Endothelial cell of umbilical vein (primary cell): ENCODE measurements at regions of chrX and their contacts with region 1.

Region 1: DNA sequence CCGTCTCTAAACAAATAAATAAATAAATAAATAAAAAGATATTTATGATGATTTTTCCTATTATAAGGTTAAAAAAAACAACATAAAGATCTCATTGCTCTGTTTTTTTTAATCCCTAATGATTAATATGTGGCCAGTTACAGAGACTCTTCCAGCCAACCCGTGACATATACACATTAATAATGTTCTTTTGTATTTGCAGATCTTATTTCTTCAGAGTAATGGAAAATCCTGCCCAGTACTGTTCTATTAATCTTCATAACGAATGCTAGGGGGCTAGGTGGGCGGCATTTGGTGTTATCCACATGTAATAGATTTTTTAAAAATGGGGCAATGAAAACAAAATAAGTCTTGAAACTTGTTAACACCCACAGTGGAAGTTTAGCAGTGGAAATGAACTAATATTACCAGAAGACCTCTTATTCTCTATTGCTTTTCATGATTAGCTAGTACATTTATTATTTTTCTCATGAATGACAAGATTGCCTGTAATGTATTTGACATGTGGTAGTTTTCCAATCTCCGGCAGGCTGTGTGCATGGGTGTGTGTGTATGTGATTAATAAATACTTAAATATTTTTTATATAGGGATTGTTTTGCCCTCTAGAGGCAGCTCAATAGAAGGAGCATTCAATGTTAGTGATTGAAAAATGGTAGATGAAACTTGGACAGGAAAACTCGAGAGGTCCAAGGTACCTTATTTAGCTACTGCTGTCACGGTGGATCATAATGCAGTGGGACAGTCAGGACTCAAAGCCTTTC is 457.4 kb downstream of the IL1RAPL1 start:
- DNase-seq: peak; percentile 29
- H3K4me3 ChIP-seq: no peak overlapping the region
- H3K27ac ChIP-seq: no peak overlapping the region
- H3K4me1 ChIP-seq: no peaks in the 10 kb centered on the region
- H3K27me3 ChIP-seq: no peaks in the 10 kb centered on the region
- CTCF ChIP-seq: peak; percentile 5 to 12
- POLR2A ChIP-seq: no peak

Region 2: GRCh38 chrX:28108186-28108945 is 936.2 kb before region 1 on chrX:
- CTCF ChIA-PET with region 1: no interaction called
- POLR2A ChIA-PET with region 1: no interaction called
- dilution Hi-C with region 1: no loop called
- intact Hi-C with region 1: loop called (anchors 10 kb)
- DNase-seq: peak; percentile 79
- H3K4me3 ChIP-seq: no peak overlapping the region
- H3K27ac ChIP-seq: peak overlapping the region; percentile 34
- H3K4me1 ChIP-seq: peaks cover 21% of the 10 kb centered on the region
- H3K27me3 ChIP-seq: no peaks in the 10 kb centered on the region
- CTCF ChIP-seq: no peak
- POLR2A ChIP-seq: no peak

Region 3: GRCh38 chrX:29187264-29187663 is 142.7 kb after region 1 on chrX:
- CTCF ChIA-PET with region 1: no interaction called
- POLR2A ChIA-PET with region 1: no interaction called
- dilution Hi-C with region 1: no loop called
- intact Hi-C with region 1: no loop called
- DNase-seq: no peak
- H3K4me3 ChIP-seq: no peak overlapping the region
- H3K27ac ChIP-seq: no peak overlapping the region
- H3K4me1 ChIP-seq: no peaks in the 10 kb centered on the region
- H3K27me3 ChIP-seq: no peaks in the 10 kb centered on the region
- CTCF ChIP-seq: no peak
- POLR2A ChIP-seq: no peak

Region 4: DNA sequence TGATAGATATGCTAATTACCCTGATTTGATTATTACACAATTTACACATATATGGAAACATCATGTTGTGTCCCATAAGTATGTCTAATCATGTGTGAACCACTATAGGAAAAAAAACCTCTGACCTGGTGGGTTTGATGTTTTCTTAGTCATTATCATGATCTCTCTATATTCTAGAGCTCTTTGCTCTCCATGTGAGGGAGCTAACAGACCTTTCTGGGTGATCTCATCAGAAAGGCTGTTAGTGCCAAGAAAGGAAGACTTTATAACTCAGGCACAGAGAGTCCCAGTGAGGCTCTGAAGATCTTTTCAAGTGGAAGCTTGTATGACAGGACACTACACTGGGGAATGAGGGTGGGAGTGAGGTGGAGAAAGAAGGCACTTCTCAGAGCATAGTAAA is 643.1 kb after region 1 on chrX:
- CTCF ChIA-PET with region 1: no interaction called
- POLR2A ChIA-PET with region 1: no interaction called
- dilution Hi-C with region 1: no loop called
- intact Hi-C with region 1: no loop called
- DNase-seq: peak; percentile 58
- H3K4me3 ChIP-seq: no peak overlapping the region
- H3K27ac ChIP-seq: no peak overlapping the region
- H3K4me1 ChIP-seq: peaks cover 5% of the 10 kb centered on the region
- H3K27me3 ChIP-seq: no peaks in the 10 kb centered on the region
- CTCF ChIP-seq: no peak
- POLR2A ChIP-seq: no peak